GM18951 (cell line): ENCODE measurements at regions of chr3 and their contacts with region 1.

Region 1: GRCh38 chr3:136385457-136385856 is 135.3 kb downstream of the PCCB start:
- POLR2A ChIP-seq: no peak

Region 2: GRCh38 chr3:136728918-136729317 is 343.5 kb after region 1 on chr3:
- in situ Hi-C with region 1: loop called (anchors 25 kb)
- POLR2A ChIP-seq: no peak

Region 3: GRCh38 chr3:137013955-137014688 is 628.7 kb after region 1 on chr3:
- in situ Hi-C with region 1: loop called (anchors 25 kb)
- POLR2A ChIP-seq: no peak